Colonic mucosa (tissue), 4 donors: ENCODE measurements at regions of chr12 and their contacts with region 1.

Region 1: GRCh38 chr12:27515671-27516070 is 8.3 kb upstream of the PPFIBP1 start:
- DNase-seq: no peak
- H3K4me3 ChIP-seq: no peak overlapping the region
- H3K27ac ChIP-seq: no peak overlapping the region
- H3K4me1 ChIP-seq: no peaks in the 10 kb centered on the region
- H3K27me3 ChIP-seq: no peaks in the 10 kb centered on the region
- CTCF ChIP-seq: no peak

Region 2: GRCh38 chr12:27631813-27632491 is 116.3 kb after region 1 on chr12:
- intact Hi-C with region 1: loop called (anchors 5 kb)
- DNase-seq: no peak
- H3K4me3 ChIP-seq: no peak overlapping the region
- H3K27ac ChIP-seq: no peak overlapping the region
- H3K4me1 ChIP-seq: no peaks in the 10 kb centered on the region
- H3K27me3 ChIP-seq: no peaks in the 10 kb centered on the region
- CTCF ChIP-seq: no peak